ENCODE measurements at regions of chr18 and their contacts with region 1.

Region 1: DNA sequence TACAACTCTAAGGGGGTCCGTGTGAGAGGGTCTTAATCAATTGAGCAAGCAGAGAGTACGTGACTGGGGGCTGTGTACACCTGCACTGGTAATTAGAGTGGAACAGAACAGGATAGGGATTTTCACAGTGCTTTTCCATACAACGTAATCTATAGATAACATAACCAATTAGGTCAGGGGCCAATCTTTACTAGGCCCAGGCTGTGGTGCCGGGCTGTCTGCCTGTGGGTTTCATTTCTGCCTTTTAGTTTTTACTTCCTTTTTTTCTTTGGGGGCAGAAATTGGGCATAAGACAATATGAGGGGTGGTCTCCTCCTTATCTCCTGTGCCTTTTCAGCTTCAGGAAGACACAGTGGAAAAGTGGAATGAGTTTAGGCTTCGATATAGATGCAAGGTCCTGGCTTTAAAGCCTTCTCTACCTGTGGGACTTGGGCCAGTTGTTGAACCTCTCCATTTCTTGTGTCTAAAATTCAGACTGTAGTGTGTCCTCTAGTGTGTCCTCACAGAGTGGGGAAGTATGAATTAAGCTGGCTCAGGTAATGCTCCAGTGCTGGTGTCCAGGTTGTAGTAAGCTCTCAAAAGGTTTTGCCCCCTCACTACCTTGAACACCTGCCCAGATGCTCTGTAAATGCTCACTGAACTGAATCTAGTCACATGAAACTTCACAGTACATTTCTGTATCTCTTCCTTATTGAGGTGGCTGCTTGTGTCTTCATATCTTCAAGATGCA is 422.8 kb downstream of the SETBP1 start:
- DNase-seq: peak; percentile 15
- CTCF ChIP-seq: no peak

Region 2: GRCh38 chr18:44986933-44987332 is 116.6 kb before region 1 on chr18:
- CTCF ChIA-PET with region 1: no interaction called
- POLR2A ChIA-PET with region 1: no interaction called
- DNase-seq: no peak
- CTCF ChIP-seq: no peak

Region 3: GRCh38 chr18:45026162-45026561 is 77.3 kb before region 1 on chr18:
- CTCF ChIA-PET with region 1: no interaction called
- POLR2A ChIA-PET with region 1: no interaction called
- DNase-seq: no peak
- CTCF ChIP-seq: no peak

Region 4: DNA sequence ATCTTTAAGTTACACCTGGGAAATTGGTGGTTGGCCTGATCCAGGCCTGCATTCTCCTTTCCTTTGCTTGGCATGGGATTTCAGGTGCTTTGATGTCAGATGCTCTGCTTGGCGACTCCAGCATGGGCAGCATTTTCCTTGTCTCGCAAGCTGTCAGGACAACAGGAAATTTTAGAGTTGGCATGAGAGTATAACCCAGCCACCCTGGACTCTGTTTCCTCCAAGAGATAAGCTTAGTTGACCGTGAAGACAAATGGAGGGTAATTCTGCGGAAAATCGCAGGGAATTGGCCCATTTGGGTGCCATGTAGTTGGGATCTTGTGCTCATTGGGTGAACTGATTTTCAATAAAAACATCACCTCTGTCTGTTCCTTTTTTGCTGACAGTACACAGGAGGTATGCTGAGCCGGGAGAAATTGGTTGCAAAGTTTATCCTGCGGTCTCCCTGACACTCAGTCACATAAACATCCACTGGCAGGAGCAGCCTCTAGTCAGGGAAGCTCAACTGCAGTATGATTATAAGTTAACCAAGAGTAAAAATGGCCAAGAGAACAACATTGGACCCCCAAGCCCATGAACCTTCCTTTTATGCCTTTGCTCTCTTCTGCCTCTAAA is 12.9 kb before region 1 on chr18:
- CTCF ChIA-PET with region 1: interaction called, 11 read pairs
- POLR2A ChIA-PET with region 1: no interaction called
- DNase-seq: no peak
- CTCF ChIP-seq: no peak

Region 5: GRCh38 chr18:45116116-45116515 is 12.6 kb after region 1 on chr18:
- CTCF ChIA-PET with region 1: interaction called, 17 read pairs
- POLR2A ChIA-PET with region 1: no interaction called
- DNase-seq: no peak
- CTCF ChIP-seq: no peak

Measured in GM10248 (cell line).